ENCODE measurements at regions of chr5 and their contacts with region 1.

Region 1: DNA sequence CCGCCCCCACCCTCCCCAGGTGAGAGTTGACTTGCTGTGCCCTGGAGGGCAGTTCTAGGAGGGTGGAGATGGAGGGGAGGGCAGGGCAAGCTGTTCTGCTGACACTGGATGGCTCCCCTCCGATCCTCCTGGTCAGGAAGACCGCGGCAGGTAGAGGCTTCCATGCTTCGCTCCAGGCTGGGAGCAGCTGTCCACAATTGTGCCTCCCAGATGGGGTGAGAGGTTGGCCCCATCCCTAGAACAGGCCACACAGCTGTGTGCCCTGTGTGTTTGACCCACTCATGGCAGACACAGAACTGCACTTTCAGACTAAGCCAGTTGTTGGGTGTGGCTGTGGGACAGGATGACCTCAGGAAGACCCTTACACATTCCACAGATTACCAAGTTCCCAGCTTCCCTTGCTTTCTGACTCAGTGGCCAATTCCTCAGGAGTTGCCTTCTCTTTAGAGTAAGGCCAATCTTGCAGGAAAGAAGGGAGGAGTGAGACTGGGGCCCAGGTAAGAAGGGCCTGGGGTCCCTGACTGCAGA is 72.1 kb upstream of the HSPA9 start:
- DNase-seq: no peak
- H3K4me3 ChIP-seq: no peak overlapping the region
- H3K27ac ChIP-seq: no peak overlapping the region
- H3K4me1 ChIP-seq: peaks cover 4% of the 10 kb centered on the region
- H3K27me3 ChIP-seq: no peaks in the 10 kb centered on the region
- CTCF ChIP-seq: no peak
- EP300 ChIP-seq: no peak
- POLR2A ChIP-seq: no peak

Region 2: DNA sequence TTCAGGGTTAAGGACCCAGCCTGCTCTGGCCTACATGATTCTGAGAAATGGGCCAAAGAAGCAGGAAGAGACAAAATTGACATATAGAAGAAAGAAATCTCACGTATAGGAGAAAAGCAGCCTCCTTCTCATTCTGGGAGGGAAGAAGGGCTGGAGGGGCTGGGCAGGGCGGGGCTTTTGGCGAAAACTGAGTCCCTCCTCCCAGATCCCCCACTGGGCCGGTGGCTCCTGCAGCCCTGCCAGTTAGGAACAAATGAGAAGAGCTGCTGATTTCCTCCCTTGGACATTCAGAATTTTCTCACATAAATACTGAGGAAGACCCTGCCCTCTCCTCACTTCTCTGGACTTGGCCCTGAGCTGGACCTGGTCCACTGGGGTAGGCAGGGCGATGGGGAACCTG is 563.6 kb before region 1 on chr5 and contains the start of gene WNT8A:
- intact Hi-C with region 1: no loop called
- DNase-seq: no peak
- H3K4me3 ChIP-seq: no peak within 1 kb of the TSS
- H3K27ac ChIP-seq: no peak within 1 kb of the TSS
- H3K4me1 ChIP-seq: no peaks in the 10 kb centered on the region
- H3K27me3 ChIP-seq: no peaks in the 10 kb centered on the region
- CTCF ChIP-seq: no peak
- EP300 ChIP-seq: no peak
- POLR2A ChIP-seq: no peak
- total RNA-seq, gene WNT8A: not detected

Region 3: GRCh38 chr5:138685193-138685745 is 37.9 kb after region 1 on chr5:
- intact Hi-C with region 1: loop called in 1 of 4 experiments (anchors 1 kb)
- DNase-seq: no peak
- H3K4me3 ChIP-seq: no peak overlapping the region
- H3K27ac ChIP-seq: no peak overlapping the region
- H3K4me1 ChIP-seq: no peaks in the 10 kb centered on the region
- H3K27me3 ChIP-seq: no peaks in the 10 kb centered on the region
- CTCF ChIP-seq: no peak
- EP300 ChIP-seq: no peak
- POLR2A ChIP-seq: no peak

Region 4: DNA sequence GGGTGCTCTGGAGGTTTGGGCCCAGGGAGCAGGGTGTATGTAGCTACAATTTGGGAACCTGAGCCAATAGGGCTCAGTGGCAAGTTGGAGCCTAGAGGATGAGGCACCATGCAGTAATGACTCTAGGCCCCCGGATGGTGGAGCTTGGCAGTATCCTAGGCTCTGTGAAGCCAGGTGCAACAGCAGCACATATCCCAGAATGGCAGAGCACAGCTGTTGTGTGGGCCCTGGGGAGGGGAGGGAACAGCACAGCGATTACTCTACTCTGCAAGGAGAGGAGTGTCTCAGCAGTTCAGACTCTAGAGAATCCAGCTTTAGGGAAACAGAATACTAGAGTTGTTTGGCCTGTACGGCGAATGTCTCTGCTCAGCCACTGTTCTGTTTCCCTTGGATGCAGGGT is 171.8 kb after region 1 on chr5:
- intact Hi-C with region 1: no loop called
- DNase-seq: no peak
- H3K4me3 ChIP-seq: no peak overlapping the region
- H3K27ac ChIP-seq: no peak overlapping the region
- H3K4me1 ChIP-seq: peaks cover 8% of the 10 kb centered on the region
- H3K27me3 ChIP-seq: no peaks in the 10 kb centered on the region
- CTCF ChIP-seq: no peak
- EP300 ChIP-seq: no peak
- POLR2A ChIP-seq: no peak